ENCODE measurements at regions of chr4 and their contacts with region 1.

Region 1: DNA sequence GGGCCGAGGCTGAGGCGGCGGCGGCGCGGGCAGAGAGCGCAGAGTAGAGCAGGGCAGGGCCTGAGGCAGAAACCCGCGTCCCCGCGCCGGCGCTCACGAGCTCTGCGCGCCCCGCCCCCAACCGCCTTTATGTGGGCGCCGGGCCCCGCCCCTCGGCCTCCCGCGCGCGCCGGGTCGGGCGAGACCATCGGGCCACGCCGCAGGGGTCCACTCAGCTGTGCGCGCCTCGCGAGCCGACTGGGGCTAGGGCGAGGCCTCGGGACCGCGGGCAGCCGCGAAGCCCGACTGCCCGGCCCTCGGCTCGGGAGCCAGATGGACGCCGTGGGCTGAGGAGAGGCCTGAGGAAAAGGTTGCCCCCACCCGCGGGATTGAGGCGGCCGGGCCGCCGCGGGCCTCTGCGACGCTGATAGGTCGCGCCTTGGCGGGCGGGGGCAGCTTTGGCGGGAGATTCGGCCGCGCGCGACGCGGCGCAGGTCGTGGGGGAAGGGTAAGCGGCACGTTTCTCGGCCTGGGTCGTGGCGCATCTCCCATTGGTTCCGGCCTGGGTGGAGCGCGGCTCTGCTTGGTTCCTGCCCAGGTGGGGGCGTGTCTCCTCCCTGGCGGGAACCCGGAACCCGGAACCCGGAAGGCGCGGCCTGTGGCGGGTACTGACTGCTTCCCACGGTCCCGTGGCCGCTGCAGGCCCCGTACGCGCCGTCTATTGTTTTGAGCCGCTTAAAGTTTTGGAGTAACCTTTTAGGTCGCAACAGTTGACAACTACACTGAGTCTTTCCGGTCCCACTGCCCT is at the start of gene SLBP:
- DNase-seq: peak; percentile 99
- H3K4me3 Mint-ChIP-seq: peak within 1 kb of the TSS; percentile 98
- H3K27ac Mint-ChIP-seq: peak within 1 kb of the TSS; percentile 94
- H3K4me1 Mint-ChIP-seq: peaks cover 68% of the 10 kb centered on the region
- H3K27me3 Mint-ChIP-seq: no peaks in the 10 kb centered on the region
- total RNA-seq, gene SLBP: 75.4 to 77.1 TPM

Region 2: DNA sequence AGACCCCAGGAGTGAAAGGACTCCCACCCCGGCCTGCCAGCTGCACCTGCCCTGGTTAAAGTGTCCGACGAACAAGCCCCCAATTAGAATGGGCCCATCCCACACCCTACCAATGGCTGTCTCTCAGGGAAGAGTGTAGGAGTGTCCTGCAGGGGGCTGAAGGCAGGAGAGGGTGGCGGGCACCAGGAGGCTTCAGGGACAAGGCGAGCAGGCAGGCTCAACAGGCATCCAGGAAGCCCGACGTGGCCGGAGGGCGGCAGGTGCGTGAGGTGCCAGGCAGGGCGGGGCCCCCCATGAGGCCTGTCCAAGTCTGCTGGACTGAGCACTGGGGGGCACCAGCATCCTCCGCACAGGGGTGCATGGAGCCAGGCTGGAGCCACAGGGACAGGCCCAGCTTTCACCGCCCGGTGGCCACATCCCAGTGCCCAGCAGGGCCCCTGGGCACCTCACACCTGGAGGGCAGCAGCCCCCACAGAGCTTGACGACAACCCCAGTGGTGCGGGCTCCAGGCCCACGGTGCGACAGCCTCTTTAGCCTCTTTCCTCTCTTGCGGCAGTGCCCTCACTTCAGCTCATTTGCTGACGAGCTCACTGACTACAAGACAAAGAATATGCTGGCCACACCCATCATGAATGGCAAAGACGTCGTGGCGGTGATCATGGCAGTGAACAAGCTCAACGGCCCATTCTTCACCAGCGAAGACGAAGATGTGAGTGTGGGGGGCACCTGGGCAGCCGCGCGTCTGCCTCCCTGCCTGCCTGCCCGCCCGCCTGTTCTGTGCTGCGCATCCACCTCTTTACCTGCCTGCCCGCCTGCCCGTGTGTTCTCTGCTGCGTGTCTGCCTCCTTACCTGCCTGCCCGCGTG is 1078.1 kb before region 1 on chr4:
- CTCF ChIA-PET with region 1: no interaction called
- intact Hi-C with region 1: no loop called
- DNase-seq: no peak
- H3K4me3 Mint-ChIP-seq: no peak overlapping the region
- H3K27ac Mint-ChIP-seq: no peak overlapping the region
- H3K4me1 Mint-ChIP-seq: no peaks in the 10 kb centered on the region
- H3K27me3 Mint-ChIP-seq: peaks cover 4% of the 10 kb centered on the region

Region 3: GRCh38 chr4:1683736-1684505 is 28.5 kb before region 1 on chr4 and contains the start of gene FAM53A:
- CTCF ChIA-PET with region 1: no interaction called
- intact Hi-C with region 1: loop called (anchors 1 kb)
- DNase-seq: peak; percentile 32
- H3K4me3 Mint-ChIP-seq: peak within 1 kb of the TSS; percentile 81
- H3K27ac Mint-ChIP-seq: no peak within 1 kb of the TSS
- H3K4me1 Mint-ChIP-seq: peaks cover 12% of the 10 kb centered on the region
- H3K27me3 Mint-ChIP-seq: no peaks in the 10 kb centered on the region
- total RNA-seq, gene FAM53A: 2.6 to 3.0 TPM

Region 4: GRCh38 chr4:1726146-1726934 is 13.9 kb after region 1 on chr4:
- CTCF ChIA-PET with region 1: interaction called, 7 read pairs
- intact Hi-C with region 1: loop called (anchors 1 kb)
- DNase-seq: peak; percentile 93
- H3K4me3 Mint-ChIP-seq: no peak overlapping the region
- H3K27ac Mint-ChIP-seq: peak overlapping the region; percentile 70
- H3K4me1 Mint-ChIP-seq: peaks cover 68% of the 10 kb centered on the region
- H3K27me3 Mint-ChIP-seq: no peaks in the 10 kb centered on the region

Region 5: DNA sequence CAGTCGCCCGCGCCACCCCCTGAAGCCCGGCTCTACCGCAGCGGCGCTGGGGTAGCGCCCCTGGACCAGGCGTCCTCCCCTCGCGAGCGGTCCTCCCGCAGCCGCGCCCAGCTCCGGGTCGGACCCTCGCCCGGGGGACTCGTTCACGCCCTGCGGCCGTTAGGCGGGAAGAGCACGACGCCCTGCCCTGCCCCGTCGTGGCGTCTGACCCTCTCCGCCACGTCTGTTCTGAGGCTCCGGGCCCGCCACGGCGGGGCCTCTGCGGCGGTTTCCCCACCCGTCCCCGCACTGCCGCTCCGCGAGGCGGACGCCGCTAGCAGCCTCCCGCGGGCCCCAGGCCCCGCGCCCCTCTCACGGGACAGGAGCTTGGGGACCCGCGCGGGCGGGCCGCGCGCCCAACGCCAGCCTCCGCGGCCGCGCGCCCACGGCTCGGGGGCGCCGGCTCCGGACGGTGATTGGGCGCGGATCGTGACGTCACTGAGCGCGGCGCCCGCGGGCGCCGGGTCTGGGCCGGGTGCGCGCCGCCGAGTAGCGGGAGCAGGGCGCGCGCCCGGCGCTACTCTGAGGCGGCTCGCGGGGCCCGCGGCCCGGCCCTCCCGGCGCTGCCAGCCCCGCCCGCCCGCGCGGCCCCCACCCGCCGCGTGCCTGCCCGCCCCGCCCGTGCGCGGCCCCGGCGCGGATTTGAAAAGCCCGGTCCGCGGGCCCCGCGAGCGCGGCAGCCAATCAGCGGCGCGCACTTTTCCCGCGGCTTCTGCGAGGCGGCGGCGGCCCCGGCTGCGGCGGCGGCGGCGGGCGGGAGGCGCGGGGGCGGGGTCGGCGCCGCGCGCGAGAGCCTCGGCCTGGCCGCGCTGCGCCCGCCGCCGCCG is 158.4 kb after region 1 on chr4 and contains the start of gene NSD2:
- CTCF ChIA-PET with region 1: no interaction called
- intact Hi-C with region 1: loop called (anchors 2 kb)
- DNase-seq: peak; percentile 90
- H3K4me3 Mint-ChIP-seq: peak within 1 kb of the TSS; percentile 92
- H3K27ac Mint-ChIP-seq: peak within 1 kb of the TSS; percentile 96
- H3K4me1 Mint-ChIP-seq: peaks cover 35% of the 10 kb centered on the region
- H3K27me3 Mint-ChIP-seq: no peaks in the 10 kb centered on the region
- total RNA-seq, gene NSD2: 246 to 250 TPM

Region 6: GRCh38 chr4:2436301-2436700 is 723.9 kb after region 1 on chr4:
- CTCF ChIA-PET with region 1: no interaction called
- intact Hi-C with region 1: no loop called
- DNase-seq: peak; percentile 23
- H3K4me3 Mint-ChIP-seq: no peak overlapping the region
- H3K27ac Mint-ChIP-seq: no peak overlapping the region
- H3K4me1 Mint-ChIP-seq: no peaks in the 10 kb centered on the region
- H3K27me3 Mint-ChIP-seq: no peaks in the 10 kb centered on the region

Measured in activated naive CD4-positive, alpha-beta T cell treated with anti-CD3 and anti-CD28 coated beads for 36 hours (primary cell).